Activated naive CD4-positive, alpha-beta T cell treated with anti-CD3 and anti-CD28 coated beads for 36 hours (primary cell): ENCODE measurements at regions of chr11 and their contacts with region 1.

Region 1: DNA sequence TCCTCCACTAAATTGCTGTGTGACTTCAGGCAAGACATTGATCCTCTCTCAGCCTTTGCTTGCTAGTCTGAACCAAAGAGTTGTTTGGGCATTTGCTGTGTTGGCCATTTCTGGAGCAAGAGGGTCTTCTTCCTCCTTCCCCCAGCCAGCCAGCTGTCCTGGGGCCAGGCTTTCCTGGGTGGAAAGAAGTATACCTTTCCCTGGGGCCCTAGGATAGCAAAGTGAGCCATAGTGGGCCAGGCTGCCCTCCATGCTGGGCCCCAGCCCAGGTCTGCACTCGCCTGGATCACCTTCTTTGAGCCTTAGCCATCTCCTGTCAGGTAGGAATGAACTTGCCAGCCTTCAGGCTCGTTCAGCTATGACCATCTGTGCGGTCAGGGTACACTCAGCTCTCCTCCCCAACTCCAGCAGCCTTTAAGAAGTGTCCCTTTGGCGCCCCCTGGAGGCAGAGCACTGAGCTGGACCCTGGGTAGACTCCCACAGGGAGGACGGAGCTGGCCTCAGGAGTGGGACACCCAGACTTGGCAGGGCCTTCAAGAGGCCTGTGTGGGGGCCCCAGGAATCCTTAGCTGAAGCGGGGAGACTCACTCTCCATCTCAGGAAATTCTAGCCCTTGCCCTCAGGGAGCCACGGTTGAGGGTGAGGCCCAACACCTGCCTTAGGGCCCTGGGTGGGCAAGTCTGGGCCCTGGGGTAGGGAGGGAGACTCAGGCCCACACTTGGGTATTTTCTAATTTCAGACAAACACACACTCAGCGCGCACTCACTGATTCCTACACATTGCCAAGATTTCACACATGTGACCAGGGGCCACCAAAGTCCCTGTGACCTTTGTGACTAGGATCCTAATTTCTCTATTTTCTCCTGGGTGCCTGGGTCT is 35.6 kb upstream of the TPBGL start:
- DNase-seq: peak; percentile 93
- H3K4me3 Mint-ChIP-seq: no peak overlapping the region
- H3K27ac Mint-ChIP-seq: no peak overlapping the region
- H3K4me1 Mint-ChIP-seq: no peaks in the 10 kb centered on the region
- H3K27me3 Mint-ChIP-seq: no peaks in the 10 kb centered on the region

Region 2: GRCh38 chr11:75022759-75023396 is 182.0 kb before region 1 on chr11:
- CTCF ChIA-PET with region 1: interaction called, 21 read pairs
- intact Hi-C with region 1: loop called (anchors 1 kb)
- DNase-seq: peak; percentile 87
- H3K4me3 Mint-ChIP-seq: no peak overlapping the region
- H3K27ac Mint-ChIP-seq: no peak overlapping the region
- H3K4me1 Mint-ChIP-seq: no peaks in the 10 kb centered on the region
- H3K27me3 Mint-ChIP-seq: no peaks in the 10 kb centered on the region

Region 3: GRCh38 chr11:75150879-75151278 is 54.0 kb before region 1 on chr11 and contains the start of gene SLCO2B1:
- CTCF ChIA-PET with region 1: interaction called, 430 read pairs
- intact Hi-C with region 1: no loop called
- DNase-seq: no peak
- H3K4me3 Mint-ChIP-seq: no peak within 1 kb of the TSS
- H3K27ac Mint-ChIP-seq: no peak within 1 kb of the TSS
- H3K4me1 Mint-ChIP-seq: no peaks in the 10 kb centered on the region
- H3K27me3 Mint-ChIP-seq: no peaks in the 10 kb centered on the region
- total RNA-seq, gene SLCO2B1: not detected

Region 4: DNA sequence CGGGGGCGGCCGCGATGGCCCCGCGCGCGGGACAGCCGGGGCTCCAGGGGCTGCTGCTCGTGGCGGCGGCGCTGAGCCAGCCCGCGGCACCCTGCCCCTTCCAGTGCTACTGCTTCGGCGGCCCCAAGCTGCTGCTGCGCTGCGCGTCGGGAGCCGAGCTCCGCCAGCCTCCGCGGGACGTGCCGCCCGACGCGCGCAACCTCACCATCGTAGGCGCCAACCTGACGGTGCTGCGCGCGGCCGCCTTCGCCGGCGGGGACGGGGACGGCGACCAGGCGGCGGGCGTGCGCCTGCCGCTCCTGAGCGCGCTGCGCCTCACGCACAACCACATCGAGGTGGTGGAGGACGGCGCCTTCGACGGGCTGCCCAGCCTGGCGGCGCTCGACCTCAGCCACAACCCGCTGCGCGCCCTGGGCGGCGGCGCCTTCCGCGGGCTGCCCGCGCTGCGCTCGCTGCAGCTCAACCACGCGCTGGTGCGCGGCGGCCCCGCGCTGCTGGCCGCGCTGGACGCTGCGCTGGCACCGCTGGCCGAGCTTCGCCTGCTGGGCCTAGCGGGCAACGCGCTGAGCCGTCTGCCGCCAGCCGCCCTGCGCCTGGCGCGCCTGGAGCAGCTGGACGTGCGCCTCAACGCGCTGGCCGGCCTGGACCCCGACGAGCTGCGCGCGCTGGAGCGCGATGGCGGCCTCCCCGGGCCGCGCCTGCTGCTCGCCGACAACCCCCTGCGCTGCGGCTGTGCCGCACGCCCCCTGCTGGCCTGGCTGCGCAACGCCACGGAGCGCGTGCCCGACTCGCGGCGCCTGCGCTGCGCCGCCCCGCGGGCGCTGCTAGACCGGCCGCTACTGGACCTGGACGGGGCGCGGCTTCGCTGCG is 36.3 kb after region 1 on chr11:
- CTCF ChIA-PET with region 1: interaction called, 47 read pairs
- intact Hi-C with region 1: no loop called
- DNase-seq: peak; percentile 86
- H3K4me3 Mint-ChIP-seq: peak overlapping the region; percentile 63
- H3K27ac Mint-ChIP-seq: no peak overlapping the region
- H3K4me1 Mint-ChIP-seq: peaks cover 10% of the 10 kb centered on the region
- H3K27me3 Mint-ChIP-seq: peaks cover 33% of the 10 kb centered on the region

Region 5: GRCh38 chr11:76062733-76063132 is 857.8 kb after region 1 on chr11:
- CTCF ChIA-PET with region 1: no interaction called
- intact Hi-C with region 1: no loop called
- DNase-seq: no peak
- H3K4me3 Mint-ChIP-seq: no peak overlapping the region
- H3K27ac Mint-ChIP-seq: no peak overlapping the region
- H3K4me1 Mint-ChIP-seq: no peaks in the 10 kb centered on the region
- H3K27me3 Mint-ChIP-seq: no peaks in the 10 kb centered on the region